AG04449 (cell line): ENCODE measurements at regions of chr5 and their contacts with region 1.

Region 1: DNA sequence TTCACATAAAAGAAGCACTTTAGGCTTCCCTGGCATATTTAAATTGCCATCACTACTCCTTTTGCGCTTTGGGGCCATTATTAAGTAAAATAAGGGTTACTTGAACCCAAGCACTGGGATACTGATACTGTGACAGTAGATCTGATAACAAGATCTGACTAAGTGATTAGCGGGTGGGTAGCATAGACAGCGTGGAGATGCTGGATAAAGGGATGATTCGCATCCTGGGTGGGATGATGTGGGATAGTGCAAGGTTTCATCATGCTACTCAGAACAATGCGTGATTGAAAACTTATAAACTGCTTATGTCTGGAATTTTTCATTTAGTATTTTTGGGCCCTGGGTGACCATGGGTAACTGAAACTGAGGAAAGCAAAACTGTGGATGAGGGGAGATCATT is 75.1 kb downstream of the PTTG1 start:
- DNase-seq: no peak
- H3K4me3 ChIP-seq: no peak overlapping the region
- CTCF ChIP-seq: no peak

Region 2: DNA sequence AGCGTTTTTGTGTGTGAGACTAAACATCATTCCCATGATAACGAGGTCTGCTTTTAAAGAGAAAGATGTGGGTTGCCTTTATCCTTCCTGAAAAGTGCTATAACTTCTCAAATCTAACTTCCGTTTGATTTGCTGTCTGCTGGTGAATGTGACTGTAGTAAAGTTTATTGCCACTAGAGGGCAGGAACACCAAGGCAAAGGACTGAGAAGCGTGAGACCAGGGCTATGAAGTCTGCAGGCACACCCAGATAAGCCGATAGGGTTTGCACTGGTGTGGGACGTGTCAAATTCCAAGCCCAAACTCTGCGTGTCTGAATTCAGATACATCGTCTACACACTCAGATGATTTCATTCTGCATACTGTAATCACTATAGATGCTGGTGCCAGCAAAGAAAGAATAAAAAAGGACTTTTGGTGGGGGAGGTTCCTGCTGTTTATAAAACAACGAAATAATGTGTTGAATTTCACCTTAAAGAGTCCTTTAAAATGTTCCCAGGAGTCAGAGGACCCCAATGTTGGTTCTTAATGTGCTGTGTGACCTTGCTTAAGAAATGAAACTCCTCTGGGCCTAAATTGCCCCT is 12.1 kb after region 1 on chr5:
- CTCF ChIA-PET with region 1: interaction called, 23 read pairs
- POLR2A ChIA-PET with region 1: no interaction called
- DNase-seq: peak; percentile 49
- H3K4me3 ChIP-seq: no peak overlapping the region
- CTCF ChIP-seq: peak; percentile 74